ENCODE measurements at regions of chr10 and their contacts with region 1.

Region 1: DNA sequence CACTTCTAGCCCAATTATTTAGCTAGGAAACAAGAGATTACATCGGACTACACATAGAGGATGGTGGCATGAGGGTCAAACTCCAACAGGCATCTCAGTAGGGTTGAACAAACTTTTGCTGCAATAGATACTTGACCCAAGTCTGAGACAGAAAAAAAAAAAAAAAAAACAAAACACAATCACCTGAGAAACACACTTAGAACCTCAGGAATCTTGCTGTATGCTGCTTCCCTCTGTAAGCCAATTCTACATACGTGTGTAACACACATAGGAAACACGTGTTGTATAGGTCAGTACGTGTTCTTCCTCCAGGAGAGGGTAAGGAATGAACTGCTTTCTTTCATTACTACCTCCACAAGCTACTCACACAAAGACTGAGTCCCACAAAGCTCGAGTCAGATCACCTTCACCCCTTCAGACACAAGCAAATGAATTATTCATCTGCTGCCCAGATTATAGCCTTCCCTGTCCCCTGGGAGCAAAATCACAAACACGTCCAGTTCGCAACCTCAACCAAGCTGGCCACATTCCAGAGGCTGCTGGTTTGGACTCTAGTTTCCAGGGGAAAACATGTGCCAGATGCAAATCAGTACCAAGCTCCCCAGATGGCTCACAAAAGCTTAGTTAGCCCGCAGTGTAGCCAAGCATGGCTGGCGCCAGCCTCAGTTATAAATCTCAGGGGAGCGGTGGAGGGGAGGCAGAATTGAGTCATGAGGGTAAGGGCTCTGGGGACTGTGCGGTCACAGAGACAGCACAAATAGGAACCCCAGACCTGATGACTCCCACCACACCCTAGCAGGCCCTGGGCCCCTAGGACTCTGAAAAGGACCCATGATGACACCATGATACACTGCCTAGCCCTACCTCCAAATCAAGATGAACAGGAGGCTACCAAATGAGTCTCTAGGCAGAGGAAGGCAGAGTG is 15.1 kb downstream of the PSAP start:
- DNase-seq: peak; percentile 40 to 93 (median 84)
- H3K4me3 ChIP-seq: peak overlapping the region in 38 of 59 donors; percentile 0 to 51 (median 20)
- H3K27ac ChIP-seq: peak overlapping the region; percentile 59 to 98 (median 92)
- H3K27me3 ChIP-seq: no peaks in the 10 kb centered on the region
- CTCF ChIP-seq: peak in 7 of 56 donors; percentile 4 to 19 (median 8)

Region 2: GRCh38 chr10:71748671-71749191 is 87.2 kb before region 1 on chr10:
- intact Hi-C with region 1: no loop called
- DNase-seq: peak in 2 of 10 donors; percentile 42 to 46
- H3K4me3 ChIP-seq: no peak overlapping the region
- H3K27ac ChIP-seq: peak overlapping the region in 56 of 59 donors; percentile 4 to 88 (median 66)
- H3K27me3 ChIP-seq: no peaks in the 10 kb centered on the region
- CTCF ChIP-seq: peak in 2 of 56 donors; percentile 10 to 12

Region 3: GRCh38 chr10:71850637-71851464 is 14.9 kb after region 1 on chr10 and contains the start of gene PSAP:
- intact Hi-C with region 1: loop called in 1 of 2 experiments (anchors 2 kb)
- DNase-seq: peak; percentile 92 to 98 (median 97)
- H3K4me3 ChIP-seq: peak within 1 kb of the TSS; percentile 77 to 100 (median 98)
- H3K27ac ChIP-seq: peak within 1 kb of the TSS; percentile 87 to 100 (median 99)
- H3K27me3 ChIP-seq: no peaks in the 10 kb centered on the region
- CTCF ChIP-seq: peak in 33 of 56 donors; percentile 5 to 63 (median 32)
- total RNA-seq, gene PSAP: 1,158 to 1,954 (median 1,559) TPM

Region 4: GRCh38 chr10:71888623-71889387 is 52.9 kb after region 1 on chr10:
- intact Hi-C with region 1: loop called (anchors 5 kb)
- DNase-seq: peak; percentile 61 to 86 (median 72)
- H3K4me3 ChIP-seq: peak overlapping the region; percentile 53 to 87 (median 69)
- H3K27ac ChIP-seq: peak overlapping the region in 54 of 59 donors; percentile 9 to 88 (median 68)
- H3K27me3 ChIP-seq: no peaks in the 10 kb centered on the region
- CTCF ChIP-seq: peak in 29 of 56 donors; percentile 14 to 51 (median 26)

Region 5: DNA sequence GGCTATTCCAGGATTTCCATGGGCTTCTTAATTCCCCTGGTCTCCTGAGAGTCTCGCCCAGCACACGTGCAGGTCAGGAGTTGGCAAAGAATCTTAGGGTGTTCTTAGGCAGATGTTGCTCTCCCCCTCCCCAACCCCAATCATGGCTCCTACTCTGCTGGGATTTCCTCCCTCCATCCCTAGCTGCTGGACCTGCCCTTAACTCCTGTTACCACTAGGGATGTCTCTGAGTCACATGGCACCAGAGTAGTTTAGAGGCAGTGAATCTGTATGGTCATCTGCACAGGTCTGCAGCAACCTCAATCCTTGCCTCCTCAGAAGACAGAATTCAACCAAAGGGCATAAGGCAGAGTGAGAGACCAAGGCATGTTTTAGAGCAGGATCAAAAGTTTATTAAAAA is 76.5 kb after region 1 on chr10:
- intact Hi-C with region 1: no loop called
- DNase-seq: no peak
- H3K4me3 ChIP-seq: no peak overlapping the region
- H3K27ac ChIP-seq: no peak overlapping the region
- H3K27me3 ChIP-seq: no peaks in the 10 kb centered on the region
- CTCF ChIP-seq: no peak

Region 6: GRCh38 chr10:71957546-71958275 is 121.8 kb after region 1 on chr10:
- intact Hi-C with region 1: loop called in 1 of 2 experiments (anchors 10 kb)
- DNase-seq: no peak
- H3K4me3 ChIP-seq: no peak overlapping the region
- H3K27ac ChIP-seq: peak overlapping the region in 55 of 59 donors; percentile 1 to 86 (median 64)
- H3K27me3 ChIP-seq: no peaks in the 10 kb centered on the region
- CTCF ChIP-seq: peak in 6 of 56 donors; percentile 6 to 22 (median 12)

Measured in dorsolateral prefrontal cortex (tissue), 120 donors.